Right cardiac atrium (tissue), 5 donors: ENCODE measurements at regions of chr12 and their contacts with region 1.

Region 1: GRCh38 chr12:27733052-27733656 is 22.5 kb downstream of the MRPS35 start:
- DNase-seq: no peak
- ATAC-seq: no peak
- H3K4me3 ChIP-seq: no peak overlapping the region
- H3K27ac ChIP-seq: no peak overlapping the region
- H3K4me1 ChIP-seq: no peaks in the 10 kb centered on the region
- H3K27me3 ChIP-seq: no peaks in the 10 kb centered on the region

Region 2: GRCh38 chr12:27821259-27821973 is 88.3 kb after region 1 on chr12:
- intact Hi-C with region 1: loop called in 3 of 4 experiments (anchors 5 to 10 kb)
- DNase-seq: peak in 1 of 3 donors; percentile 41
- ATAC-seq: peak; percentile 64 to 70
- H3K4me3 ChIP-seq: no peak overlapping the region
- H3K27ac ChIP-seq: no peak overlapping the region
- H3K4me1 ChIP-seq: no peaks in the 10 kb centered on the region
- H3K27me3 ChIP-seq: no peaks in the 10 kb centered on the region

Region 3: GRCh38 chr12:27975244-27976136 is 242.3 kb after region 1 on chr12:
- intact Hi-C with region 1: no loop called
- DNase-seq: peak; percentile 43 to 70 (median 47)
- ATAC-seq: peak; percentile 54 to 85
- H3K4me3 ChIP-seq: no peak overlapping the region
- H3K27ac ChIP-seq: no peak overlapping the region
- H3K4me1 ChIP-seq: no peaks in the 10 kb centered on the region
- H3K27me3 ChIP-seq: no peaks in the 10 kb centered on the region